ENCODE measurements at regions of chr3 and their contacts with region 1.

Region 1: GRCh38 chr3:189563866-189564563 is 67.2 kb upstream of the TP63 start:
- DNase-seq: peak; percentile 52
- H3K4me3 Mint-ChIP-seq: peak overlapping the region; percentile 2
- H3K27ac Mint-ChIP-seq: peak overlapping the region; percentile 58
- H3K4me1 Mint-ChIP-seq: peaks cover 56% of the 10 kb centered on the region
- H3K27me3 Mint-ChIP-seq: peaks cover 4% of the 10 kb centered on the region

Region 2: GRCh38 chr3:189270248-189270832 is 293.7 kb before region 1 on chr3:
- intact Hi-C with region 1: loop called (anchors 1 kb)
- DNase-seq: peak; percentile 7
- H3K4me3 Mint-ChIP-seq: no peak overlapping the region
- H3K27ac Mint-ChIP-seq: no peak overlapping the region
- H3K4me1 Mint-ChIP-seq: peaks cover 15% of the 10 kb centered on the region
- H3K27me3 Mint-ChIP-seq: no peaks in the 10 kb centered on the region

Region 3: DNA sequence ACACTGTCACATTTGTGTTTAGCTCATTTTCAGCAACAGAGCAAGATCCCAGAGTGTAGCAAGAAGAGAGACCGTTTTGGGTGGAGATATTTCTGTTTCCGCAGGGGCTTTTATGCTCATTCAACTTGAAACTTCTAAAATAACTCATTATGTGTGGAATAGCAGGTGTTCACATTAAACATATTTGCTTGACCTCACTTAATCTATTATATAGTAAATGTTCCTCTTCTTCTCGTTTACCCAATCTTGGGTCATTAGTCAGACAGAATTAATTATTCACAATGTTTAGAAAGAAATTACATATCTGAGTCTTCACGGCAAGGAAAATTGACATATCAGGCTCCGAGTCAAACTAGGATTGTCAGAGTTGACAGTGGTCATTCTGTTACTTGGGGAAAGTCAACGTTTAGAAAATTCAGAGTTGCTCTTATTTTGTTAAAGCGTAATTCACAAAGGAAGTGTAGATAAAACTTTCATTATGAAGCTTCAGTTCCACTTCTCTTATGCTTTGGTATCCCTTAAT is 169.4 kb before region 1 on chr3:
- intact Hi-C with region 1: loop called (anchors 10 kb)
- DNase-seq: no peak
- H3K4me3 Mint-ChIP-seq: peak overlapping the region; percentile 20
- H3K27ac Mint-ChIP-seq: peak overlapping the region; percentile 76
- H3K4me1 Mint-ChIP-seq: peaks cover 34% of the 10 kb centered on the region
- H3K27me3 Mint-ChIP-seq: no peaks in the 10 kb centered on the region

Region 4: DNA sequence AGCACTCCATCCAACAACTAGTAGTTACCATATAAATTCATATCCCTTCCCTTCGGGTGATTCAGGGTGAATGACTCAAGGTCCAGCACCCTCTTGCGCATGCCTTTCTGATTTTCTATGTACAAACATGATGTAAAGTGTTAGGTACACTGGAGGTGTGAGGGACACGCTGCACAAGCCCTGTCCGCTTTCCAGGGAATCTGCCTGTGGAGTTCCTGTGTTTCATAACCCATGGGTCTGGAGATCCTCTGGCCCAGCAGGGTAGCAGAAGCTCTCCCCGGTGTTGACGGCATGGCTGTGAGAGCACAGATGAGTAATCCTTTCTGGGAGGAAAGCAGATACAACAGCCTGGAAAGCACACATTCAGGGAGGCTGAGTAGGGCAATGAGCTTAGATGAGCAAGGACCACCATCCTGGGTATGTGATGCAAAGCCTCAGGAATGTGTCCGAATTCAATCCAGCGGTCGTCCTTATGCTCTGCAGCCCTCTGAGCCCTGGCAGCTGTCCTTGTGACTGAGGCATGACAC is 75.7 kb before region 1 on chr3:
- intact Hi-C with region 1: no loop called
- DNase-seq: no peak
- H3K4me3 Mint-ChIP-seq: no peak overlapping the region
- H3K27ac Mint-ChIP-seq: no peak overlapping the region
- H3K4me1 Mint-ChIP-seq: no peaks in the 10 kb centered on the region
- H3K27me3 Mint-ChIP-seq: peaks cover 6% of the 10 kb centered on the region

Region 5: GRCh38 chr3:189502676-189503257 is 61.2 kb before region 1 on chr3:
- intact Hi-C with region 1: no loop called
- DNase-seq: no peak
- H3K4me3 Mint-ChIP-seq: no peak overlapping the region
- H3K27ac Mint-ChIP-seq: no peak overlapping the region
- H3K4me1 Mint-ChIP-seq: peaks cover 12% of the 10 kb centered on the region
- H3K27me3 Mint-ChIP-seq: no peaks in the 10 kb centered on the region

Region 6: DNA sequence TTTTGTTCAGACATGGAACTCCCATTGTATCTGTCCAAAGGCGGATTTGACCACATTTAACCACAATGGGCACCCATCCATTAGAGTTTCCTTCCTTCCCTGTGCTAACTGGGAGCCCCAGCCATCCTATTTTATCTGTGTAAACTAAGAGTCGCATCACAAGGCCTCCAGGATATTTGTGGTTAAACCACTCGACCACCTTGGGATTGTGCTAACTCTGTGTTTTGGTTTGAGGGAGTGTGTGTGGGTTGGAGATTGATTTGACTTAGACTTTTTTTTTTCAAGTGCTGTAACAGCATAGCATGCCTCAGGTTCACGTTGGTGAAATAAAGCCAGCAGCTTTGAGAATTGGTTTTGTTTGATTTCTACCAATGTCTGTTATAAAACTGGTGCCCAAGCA is 33.2 kb before region 1 on chr3:
- intact Hi-C with region 1: loop called (anchors 1 kb)
- DNase-seq: no peak
- H3K4me3 Mint-ChIP-seq: no peak overlapping the region
- H3K27ac Mint-ChIP-seq: peak overlapping the region; percentile 61
- H3K4me1 Mint-ChIP-seq: peaks cover 24% of the 10 kb centered on the region
- H3K27me3 Mint-ChIP-seq: no peaks in the 10 kb centered on the region

Region 7: GRCh38 chr3:189537135-189537534 is 26.9 kb before region 1 on chr3:
- intact Hi-C with region 1: loop called (anchors 1 kb)
- DNase-seq: no peak
- H3K4me3 Mint-ChIP-seq: no peak overlapping the region
- H3K27ac Mint-ChIP-seq: peak overlapping the region; percentile 28
- H3K4me1 Mint-ChIP-seq: peaks cover 10% of the 10 kb centered on the region
- H3K27me3 Mint-ChIP-seq: no peaks in the 10 kb centered on the region

Region 8: GRCh38 chr3:189588070-189588820 is 24.2 kb after region 1 on chr3:
- intact Hi-C with region 1: loop called (anchors 2 kb)
- DNase-seq: no peak
- H3K4me3 Mint-ChIP-seq: no peak overlapping the region
- H3K27ac Mint-ChIP-seq: no peak overlapping the region
- H3K4me1 Mint-ChIP-seq: peaks cover 14% of the 10 kb centered on the region
- H3K27me3 Mint-ChIP-seq: peaks cover 8% of the 10 kb centered on the region

Region 9: GRCh38 chr3:189630767-189631372 is 66.9 kb after region 1 on chr3:
- intact Hi-C with region 1: loop called (anchors 2 kb)
- DNase-seq: no peak
- H3K4me3 Mint-ChIP-seq: peak overlapping the region; percentile 27
- H3K27ac Mint-ChIP-seq: peak overlapping the region; percentile 20
- H3K4me1 Mint-ChIP-seq: peaks cover 37% of the 10 kb centered on the region
- H3K27me3 Mint-ChIP-seq: peaks cover 2% of the 10 kb centered on the region

Measured in activated T-helper 1 cell treated with anti-CD3 and anti-CD28 coated beads, Interleukin-12 subunit alpha, Interleukin-12 subunit beta, Interleukin-2, Interleukin-4 antibody, amounts not matched to agents 30 ng/mL and 10 ng/mL and 1 ng/mL, durations not matched to agents 14 hours and 24 hours and 36 hours (primary cell).